CD4-positive, alpha-beta T cell (primary cell): ENCODE measurements at regions of chr22 and their contacts with region 1.

Region 1: DNA sequence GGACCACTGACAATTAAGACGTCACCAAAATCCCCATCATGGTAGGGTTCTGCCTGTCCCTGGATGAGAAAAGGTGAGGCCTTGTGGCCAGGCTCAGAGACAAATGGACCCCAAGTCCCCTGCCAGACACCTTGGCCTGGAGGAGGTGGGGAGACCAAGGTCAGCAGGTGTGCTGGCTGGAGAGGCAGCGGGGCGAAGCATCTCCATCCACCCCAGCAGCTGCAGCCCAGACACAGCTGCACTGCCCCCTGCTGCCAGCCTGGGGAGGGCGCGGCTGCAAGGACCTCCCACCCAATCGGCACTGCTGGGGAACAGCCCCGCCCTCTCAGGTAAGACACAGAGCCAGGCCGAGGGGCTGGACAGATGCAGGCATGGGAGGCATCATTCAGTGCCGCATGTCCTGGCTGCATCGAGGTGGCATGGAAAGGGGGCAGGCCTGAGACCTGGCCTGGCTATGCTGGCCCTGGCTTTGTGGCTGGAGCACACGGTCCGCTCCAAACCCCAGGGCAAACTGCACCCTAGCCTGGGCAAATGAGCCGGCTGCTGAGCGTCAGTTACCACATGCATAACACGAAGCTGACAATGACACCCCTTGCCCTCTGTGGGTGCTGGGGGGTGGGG is 12.2 kb upstream of the MFNG start:
- DNase-seq: peak; percentile 56 to 88 (median 72)
- ATAC-seq: peak; percentile 99
- H3K4me3 ChIP-seq: no peak overlapping the region
- H3K4me3 Mint-ChIP-seq: no peak overlapping the region
- H3K27ac ChIP-seq: no peak overlapping the region
- H3K27ac Mint-ChIP-seq: no peak overlapping the region
- H3K4me1 ChIP-seq: peaks cover 30% of the 10 kb centered on the region
- H3K4me1 Mint-ChIP-seq: peaks cover 28% of the 10 kb centered on the region
- H3K27me3 ChIP-seq: no peaks in the 10 kb centered on the region
- H3K27me3 Mint-ChIP-seq: no peaks in the 10 kb centered on the region
- CTCF ChIP-seq: peak; percentile 76

Region 2: DNA sequence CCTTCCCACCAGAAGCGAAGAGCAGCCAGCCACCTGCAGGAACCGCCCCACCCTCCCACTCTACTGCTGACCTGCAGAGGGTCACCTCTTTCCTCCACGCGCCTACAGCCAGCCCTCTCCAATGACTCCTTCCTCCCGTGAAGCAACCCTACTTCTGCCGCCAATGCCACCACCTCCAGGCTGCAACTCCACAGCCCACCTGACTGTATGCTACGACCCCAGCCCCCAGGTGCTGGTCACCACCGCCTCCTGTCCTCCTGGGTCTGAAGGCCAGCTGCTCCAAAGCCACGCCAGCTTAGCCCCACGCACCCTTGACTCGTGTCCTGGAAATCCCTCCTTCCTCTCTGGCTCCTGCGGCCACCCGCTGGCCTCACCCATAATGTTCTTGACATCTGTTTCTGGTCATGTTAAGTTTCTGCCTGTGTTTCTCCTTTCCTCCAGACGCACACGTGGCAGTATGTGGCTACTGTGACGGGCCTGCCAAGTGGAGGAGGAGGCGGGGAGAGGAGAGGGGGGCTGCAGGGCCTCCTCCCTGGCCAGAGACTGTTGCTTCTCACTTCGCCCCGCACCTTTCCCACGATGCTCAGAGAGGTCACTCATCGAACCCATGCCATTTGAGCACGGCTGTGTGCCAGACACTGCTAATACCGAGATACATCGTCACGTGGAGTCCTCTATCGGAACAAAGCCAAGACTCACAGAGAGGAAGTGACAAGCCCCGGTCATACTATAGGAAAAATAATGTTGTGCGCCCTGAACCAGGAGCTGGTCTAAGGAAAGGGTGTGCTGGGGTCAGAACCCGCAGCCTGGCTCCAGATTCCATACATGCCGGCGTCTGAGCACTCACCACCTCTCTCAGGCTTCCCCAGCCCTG is 321.9 kb before region 1 on chr22:
- CTCF ChIA-PET with region 1: no interaction called
- POLR2A ChIA-PET with region 1: no interaction called
- intact Hi-C with region 1: no loop called
- DNase-seq: peak in 2 of 14 experiments; percentile 49 to 50
- ATAC-seq: peak; percentile 48
- H3K4me3 ChIP-seq: no peak overlapping the region
- H3K4me3 Mint-ChIP-seq: peak overlapping the region; percentile 4
- H3K27ac ChIP-seq: no peak overlapping the region
- H3K27ac Mint-ChIP-seq: peak overlapping the region; percentile 24
- H3K4me1 ChIP-seq: peaks cover 25% of the 10 kb centered on the region
- H3K4me1 Mint-ChIP-seq: peaks cover 25% of the 10 kb centered on the region
- H3K27me3 ChIP-seq: no peaks in the 10 kb centered on the region
- H3K27me3 Mint-ChIP-seq: no peaks in the 10 kb centered on the region
- CTCF ChIP-seq: no peak

Region 3: DNA sequence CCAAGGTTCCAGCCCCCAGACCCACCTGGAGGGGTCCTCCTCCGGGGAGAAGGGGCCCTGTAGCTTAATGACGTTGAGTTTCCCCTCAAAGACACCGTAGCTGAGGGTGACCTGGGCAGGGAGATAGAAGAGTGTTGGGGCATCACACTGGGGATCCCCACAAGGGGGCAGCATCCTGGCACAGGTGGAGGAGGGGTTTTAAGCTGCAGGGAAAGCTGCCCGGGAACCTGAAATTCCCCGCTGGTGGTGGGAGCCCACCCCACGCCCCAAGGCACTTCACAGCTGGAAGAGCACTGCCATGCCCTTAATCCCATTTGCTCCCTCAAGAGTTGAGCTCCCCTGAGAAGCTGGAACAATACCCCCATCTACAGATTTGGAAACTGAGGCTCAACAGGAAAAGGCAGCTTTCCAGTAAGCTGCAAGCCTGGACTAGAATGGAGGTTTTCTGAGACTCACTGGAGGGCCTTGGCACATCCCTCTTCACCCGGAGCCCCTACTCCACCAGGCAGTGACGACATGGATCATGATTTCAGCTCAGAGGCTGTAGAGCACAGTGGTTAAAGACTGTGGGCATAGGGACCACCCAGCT is 25.9 kb before region 1 on chr22:
- CTCF ChIA-PET with region 1: interaction called, 41 read pairs
- POLR2A ChIA-PET with region 1: interaction called, 6 read pairs
- intact Hi-C with region 1: loop called (anchors 1 kb)
- DNase-seq: peak; percentile 25 to 73 (median 47)
- ATAC-seq: no peak
- H3K4me3 ChIP-seq: no peak overlapping the region
- H3K4me3 Mint-ChIP-seq: no peak overlapping the region
- H3K27ac ChIP-seq: no peak overlapping the region
- H3K27ac Mint-ChIP-seq: peak overlapping the region; percentile 62
- H3K4me1 ChIP-seq: peaks cover 9% of the 10 kb centered on the region
- H3K4me1 Mint-ChIP-seq: peaks cover 18% of the 10 kb centered on the region
- H3K27me3 ChIP-seq: no peaks in the 10 kb centered on the region
- H3K27me3 Mint-ChIP-seq: no peaks in the 10 kb centered on the region
- CTCF ChIP-seq: peak; percentile 70